GM10248 (cell line): ENCODE measurements at regions of chr1 and their contacts with region 1.

Region 1: GRCh38 chr1:177948336-177948972 is 21.4 kb downstream of the SEC16B start:
- DNase-seq: peak; percentile 52
- CTCF ChIP-seq: peak; percentile 80

Region 2: GRCh38 chr1:177256153-177257075 is 692.0 kb before region 1 on chr1:
- CTCF ChIA-PET with region 1: interaction called, 27 read pairs
- POLR2A ChIA-PET with region 1: no interaction called
- DNase-seq: peak; percentile 46
- CTCF ChIP-seq: peak; percentile 39

Region 3: GRCh38 chr1:177351361-177352119 is 596.9 kb before region 1 on chr1:
- CTCF ChIA-PET with region 1: no interaction called
- POLR2A ChIA-PET with region 1: no interaction called
- DNase-seq: no peak
- CTCF ChIP-seq: no peak

Region 4: GRCh38 chr1:177928194-177928593 is 20.3 kb before region 1 on chr1:
- CTCF ChIA-PET with region 1: interaction called, 30 read pairs
- POLR2A ChIA-PET with region 1: no interaction called
- DNase-seq: no peak
- CTCF ChIP-seq: no peak

Region 5: DNA sequence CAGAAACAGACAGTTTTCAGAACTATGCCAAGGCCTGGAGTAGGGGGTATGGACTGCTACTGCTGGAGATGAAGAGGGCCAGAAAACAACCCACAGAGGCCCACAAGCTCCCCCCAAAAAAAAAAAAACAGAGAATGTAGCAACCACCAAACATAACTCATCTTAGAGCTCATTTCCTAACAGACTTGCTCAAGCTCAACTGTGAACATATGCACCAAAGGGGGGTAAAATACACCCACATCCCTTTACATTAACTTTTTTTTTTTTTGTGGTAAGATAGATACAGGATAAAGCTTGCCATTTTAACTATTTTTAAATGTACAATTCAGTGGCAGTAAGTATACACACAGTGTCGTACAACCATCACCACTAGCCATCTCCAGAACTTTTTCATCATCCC is 14.6 kb before region 1 on chr1:
- CTCF ChIA-PET with region 1: interaction called, 30 read pairs
- POLR2A ChIA-PET with region 1: no interaction called
- DNase-seq: no peak
- CTCF ChIP-seq: no peak

Region 6: DNA sequence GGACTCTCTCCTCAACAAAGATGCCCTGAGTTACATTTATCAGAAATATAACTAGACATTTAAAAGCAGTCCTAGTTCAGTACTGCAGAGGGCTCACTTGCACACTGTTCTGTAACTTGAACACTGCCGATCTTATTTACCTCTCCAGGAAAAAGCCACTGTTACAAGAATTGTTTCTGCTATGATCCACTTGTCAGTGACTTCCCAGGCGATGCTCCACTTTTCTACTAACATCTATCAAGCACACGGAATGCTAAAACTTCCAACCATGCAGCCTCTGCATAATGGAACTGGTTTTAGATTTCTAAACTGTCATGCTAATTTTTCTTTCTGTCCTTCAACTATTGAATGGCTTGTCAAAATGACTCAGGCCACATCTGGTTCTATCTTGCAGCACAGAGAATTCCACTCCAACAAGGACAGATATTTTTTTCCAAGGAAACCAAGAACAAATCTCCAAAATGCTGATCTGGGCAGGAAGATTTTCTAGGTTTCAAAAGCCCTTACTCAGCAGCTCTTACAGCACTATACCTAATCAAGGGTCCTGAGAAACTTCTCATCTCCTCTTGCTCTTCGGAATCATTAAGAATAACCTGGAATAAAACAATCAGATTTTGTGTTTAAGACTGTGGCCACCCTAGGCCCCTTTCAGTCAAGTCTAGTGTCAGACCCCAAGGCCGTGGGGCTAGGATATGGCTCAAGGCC is 11.5 kb after region 1 on chr1:
- CTCF ChIA-PET with region 1: interaction called, 32 read pairs
- POLR2A ChIA-PET with region 1: no interaction called
- DNase-seq: no peak
- CTCF ChIP-seq: no peak